Activated naive CD4-positive, alpha-beta T cell treated with anti-CD3 and anti-CD28 coated beads for 36 hours (primary cell): ENCODE measurements at regions of chr2 and their contacts with region 1.

Region 1: DNA sequence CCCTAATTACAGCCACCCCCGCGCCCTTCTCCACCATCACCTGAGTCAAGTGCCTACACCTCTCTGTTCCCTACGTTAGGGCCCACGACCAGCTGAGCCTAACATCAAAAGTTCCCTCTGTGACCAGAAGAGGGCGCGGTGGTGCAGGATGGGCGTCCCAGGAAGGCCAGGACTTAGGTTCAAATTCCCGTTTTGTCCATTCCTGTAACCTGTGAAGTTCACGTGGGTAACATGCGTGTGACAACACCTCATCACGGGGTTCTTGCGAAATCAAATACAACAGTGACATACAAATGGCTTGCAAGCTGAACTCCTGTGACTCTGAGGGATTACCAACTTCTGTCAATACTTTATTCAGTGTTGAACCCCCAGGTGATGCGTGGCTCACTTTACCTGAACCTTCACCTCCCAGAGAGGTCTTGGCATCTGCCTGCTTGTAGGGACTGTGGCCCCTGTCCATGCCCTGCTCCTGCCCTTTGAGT is 207.9 kb downstream of the ARL4C start:
- DNase-seq: peak; percentile 89
- H3K4me3 Mint-ChIP-seq: no peak overlapping the region
- H3K27ac Mint-ChIP-seq: peak overlapping the region; percentile 96
- H3K4me1 Mint-ChIP-seq: peaks cover 71% of the 10 kb centered on the region
- H3K27me3 Mint-ChIP-seq: no peaks in the 10 kb centered on the region

Region 2: GRCh38 chr2:233084488-233084887 is 1204.5 kb before region 1 on chr2:
- CTCF ChIA-PET with region 1: no interaction called
- intact Hi-C with region 1: loop called (anchors 10 kb)
- DNase-seq: peak; percentile 79
- H3K4me3 Mint-ChIP-seq: peak overlapping the region; percentile 58
- H3K27ac Mint-ChIP-seq: peak overlapping the region; percentile 96
- H3K4me1 Mint-ChIP-seq: peaks cover 80% of the 10 kb centered on the region
- H3K27me3 Mint-ChIP-seq: no peaks in the 10 kb centered on the region

Region 3: GRCh38 chr2:233990261-233990798 is 298.7 kb before region 1 on chr2:
- CTCF ChIA-PET with region 1: no interaction called
- intact Hi-C with region 1: loop called (anchors 1 kb)
- DNase-seq: peak; percentile 88
- H3K4me3 Mint-ChIP-seq: no peak overlapping the region
- H3K27ac Mint-ChIP-seq: no peak overlapping the region
- H3K4me1 Mint-ChIP-seq: peaks cover 38% of the 10 kb centered on the region
- H3K27me3 Mint-ChIP-seq: no peaks in the 10 kb centered on the region

Region 4: DNA sequence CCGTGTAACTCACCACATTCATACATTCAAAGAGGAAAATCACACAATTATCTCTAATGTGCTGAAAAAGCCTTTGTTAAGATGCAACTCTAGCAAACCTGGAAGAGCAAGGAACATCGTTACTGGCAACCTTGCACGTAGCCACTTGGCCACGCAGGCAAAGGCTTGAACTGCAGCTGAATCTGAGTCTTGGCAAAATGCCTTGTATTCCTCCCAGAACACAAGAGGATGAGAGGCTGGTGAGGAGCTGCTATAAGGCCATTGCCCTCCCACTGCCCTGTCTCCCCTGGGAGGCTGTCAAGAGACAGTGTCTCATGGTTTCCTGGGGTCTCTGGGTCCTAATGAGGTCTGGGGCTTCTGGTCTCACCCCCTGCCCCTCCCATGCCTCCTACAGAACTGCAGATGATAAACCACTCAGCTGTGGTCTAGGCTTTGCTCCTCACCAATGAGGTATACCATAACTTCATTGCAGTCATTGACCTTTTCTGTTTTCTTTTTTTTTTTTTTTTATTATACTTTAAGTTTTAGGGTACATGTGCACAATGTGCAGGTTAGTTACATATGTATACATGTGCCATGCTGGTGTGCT is 97.1 kb before region 1 on chr2:
- CTCF ChIA-PET with region 1: no interaction called
- intact Hi-C with region 1: no loop called
- DNase-seq: no peak
- H3K4me3 Mint-ChIP-seq: no peak overlapping the region
- H3K27ac Mint-ChIP-seq: no peak overlapping the region
- H3K4me1 Mint-ChIP-seq: no peaks in the 10 kb centered on the region
- H3K27me3 Mint-ChIP-seq: no peaks in the 10 kb centered on the region

Region 5: GRCh38 chr2:234308813-234309195 is 19.8 kb after region 1 on chr2:
- CTCF ChIA-PET with region 1: interaction called, 27 read pairs
- intact Hi-C with region 1: loop called (anchors 1 kb)
- DNase-seq: peak; percentile 89
- H3K4me3 Mint-ChIP-seq: peak overlapping the region; percentile 53
- H3K27ac Mint-ChIP-seq: peak overlapping the region; percentile 99
- H3K4me1 Mint-ChIP-seq: peaks cover 50% of the 10 kb centered on the region
- H3K27me3 Mint-ChIP-seq: no peaks in the 10 kb centered on the region

Region 6: GRCh38 chr2:234425619-234426603 is 136.9 kb after region 1 on chr2:
- CTCF ChIA-PET with region 1: interaction called, 6 read pairs
- intact Hi-C with region 1: loop called (anchors 1 kb)
- DNase-seq: peak; percentile 77
- H3K4me3 Mint-ChIP-seq: peak overlapping the region; percentile 72
- H3K27ac Mint-ChIP-seq: peak overlapping the region; percentile 88
- H3K4me1 Mint-ChIP-seq: peaks cover 77% of the 10 kb centered on the region
- H3K27me3 Mint-ChIP-seq: no peaks in the 10 kb centered on the region

Region 7: DNA sequence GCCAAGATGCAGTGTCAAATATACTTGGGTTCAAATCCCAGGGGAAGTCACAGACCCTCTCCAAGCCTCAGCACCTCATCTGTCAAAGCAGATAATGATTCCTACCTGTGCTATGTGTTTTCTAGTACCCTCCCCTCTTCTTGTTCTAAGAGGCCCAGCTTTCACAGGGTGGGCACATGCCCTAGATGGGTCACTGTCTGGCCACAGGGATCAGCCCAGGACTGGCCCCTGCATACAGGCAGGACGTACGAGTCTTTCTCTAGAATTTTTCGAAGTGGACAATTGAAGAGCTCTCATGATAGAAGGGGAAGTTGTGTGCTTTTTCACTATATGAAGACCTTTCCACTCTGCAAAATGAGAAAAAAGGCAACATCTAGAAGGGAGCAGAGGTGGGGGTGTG is 185.6 kb after region 1 on chr2:
- CTCF ChIA-PET with region 1: no interaction called
- intact Hi-C with region 1: loop called (anchors 1 kb)
- DNase-seq: no peak
- H3K4me3 Mint-ChIP-seq: no peak overlapping the region
- H3K27ac Mint-ChIP-seq: peak overlapping the region; percentile 83
- H3K4me1 Mint-ChIP-seq: peaks cover 45% of the 10 kb centered on the region
- H3K27me3 Mint-ChIP-seq: no peaks in the 10 kb centered on the region

Region 8: DNA sequence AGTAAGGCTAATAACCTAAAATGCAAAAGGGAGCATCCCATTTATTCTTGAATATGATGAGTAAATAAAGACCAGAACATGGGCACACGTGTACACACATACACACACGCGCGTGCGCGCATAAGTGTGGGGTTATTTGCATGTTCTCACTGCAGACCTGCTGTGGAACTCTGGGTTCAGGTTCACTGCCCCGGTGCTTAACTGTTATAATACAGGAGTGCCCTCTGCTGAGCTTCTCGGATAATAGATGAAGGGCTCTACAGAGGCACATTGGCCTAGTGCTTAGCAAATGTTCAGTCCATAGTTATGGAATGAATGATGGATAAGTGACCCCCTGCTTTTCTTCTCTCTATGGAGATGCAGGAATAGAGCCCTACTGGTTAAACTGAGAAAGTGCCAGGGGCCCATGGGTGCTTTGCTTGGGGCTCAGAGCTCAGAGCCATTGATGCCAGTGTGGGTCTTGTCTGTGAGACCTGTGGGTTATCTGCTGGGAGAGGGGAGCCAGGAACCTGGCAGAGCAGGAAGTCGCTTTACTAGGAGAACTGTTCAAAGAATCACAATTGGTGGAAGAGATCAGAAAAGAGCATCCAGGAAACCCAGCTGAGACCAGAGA is 211.5 kb after region 1 on chr2:
- CTCF ChIA-PET with region 1: interaction called, 16 read pairs
- intact Hi-C with region 1: loop called (anchors 1 kb)
- DNase-seq: peak; percentile 83
- H3K4me3 Mint-ChIP-seq: no peak overlapping the region
- H3K27ac Mint-ChIP-seq: no peak overlapping the region
- H3K4me1 Mint-ChIP-seq: peaks cover 26% of the 10 kb centered on the region
- H3K27me3 Mint-ChIP-seq: no peaks in the 10 kb centered on the region